GM10248 (cell line): ENCODE measurements at regions of chr3 and their contacts with region 1.

Region 1: DNA sequence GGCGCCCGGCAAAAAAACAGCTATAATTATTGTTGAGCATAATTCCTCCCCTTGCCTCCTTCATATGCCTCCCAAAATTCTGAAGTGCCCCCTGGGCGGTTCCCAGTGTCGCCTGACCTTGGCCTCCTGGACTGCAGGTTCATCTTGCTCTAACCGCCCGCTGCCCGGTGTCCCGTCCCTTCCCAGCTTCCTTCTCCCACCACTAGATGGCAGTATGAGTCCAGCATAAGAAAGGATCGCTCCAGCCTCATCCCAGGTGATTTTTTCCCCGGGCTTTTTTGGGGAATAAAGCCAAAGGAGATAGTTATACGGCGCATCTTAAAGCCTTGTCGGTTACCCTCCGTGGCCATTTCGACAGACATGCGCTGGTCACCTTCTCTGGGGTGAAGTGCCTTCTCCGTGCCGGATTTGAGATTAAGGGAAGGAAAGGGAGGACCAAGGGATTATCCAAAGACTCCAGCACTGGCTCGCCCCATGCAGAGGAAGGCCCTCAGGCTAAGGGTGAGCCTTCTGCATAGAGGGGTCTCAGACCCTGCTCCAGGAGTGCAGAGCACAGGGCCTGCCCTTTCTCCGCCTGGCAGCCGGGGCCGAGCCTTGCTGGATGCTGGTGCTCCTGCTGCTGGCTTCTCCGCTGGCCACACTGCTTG is 45.8 kb upstream of the TRA2B start:
- DNase-seq: peak; percentile 81
- CTCF ChIP-seq: peak; percentile 89

Region 2: GRCh38 chr3:186013312-186013711 is 29.7 kb after region 1 on chr3:
- CTCF ChIA-PET with region 1: no interaction called
- POLR2A ChIA-PET with region 1: no interaction called
- DNase-seq: no peak
- CTCF ChIP-seq: no peak

Region 3: DNA sequence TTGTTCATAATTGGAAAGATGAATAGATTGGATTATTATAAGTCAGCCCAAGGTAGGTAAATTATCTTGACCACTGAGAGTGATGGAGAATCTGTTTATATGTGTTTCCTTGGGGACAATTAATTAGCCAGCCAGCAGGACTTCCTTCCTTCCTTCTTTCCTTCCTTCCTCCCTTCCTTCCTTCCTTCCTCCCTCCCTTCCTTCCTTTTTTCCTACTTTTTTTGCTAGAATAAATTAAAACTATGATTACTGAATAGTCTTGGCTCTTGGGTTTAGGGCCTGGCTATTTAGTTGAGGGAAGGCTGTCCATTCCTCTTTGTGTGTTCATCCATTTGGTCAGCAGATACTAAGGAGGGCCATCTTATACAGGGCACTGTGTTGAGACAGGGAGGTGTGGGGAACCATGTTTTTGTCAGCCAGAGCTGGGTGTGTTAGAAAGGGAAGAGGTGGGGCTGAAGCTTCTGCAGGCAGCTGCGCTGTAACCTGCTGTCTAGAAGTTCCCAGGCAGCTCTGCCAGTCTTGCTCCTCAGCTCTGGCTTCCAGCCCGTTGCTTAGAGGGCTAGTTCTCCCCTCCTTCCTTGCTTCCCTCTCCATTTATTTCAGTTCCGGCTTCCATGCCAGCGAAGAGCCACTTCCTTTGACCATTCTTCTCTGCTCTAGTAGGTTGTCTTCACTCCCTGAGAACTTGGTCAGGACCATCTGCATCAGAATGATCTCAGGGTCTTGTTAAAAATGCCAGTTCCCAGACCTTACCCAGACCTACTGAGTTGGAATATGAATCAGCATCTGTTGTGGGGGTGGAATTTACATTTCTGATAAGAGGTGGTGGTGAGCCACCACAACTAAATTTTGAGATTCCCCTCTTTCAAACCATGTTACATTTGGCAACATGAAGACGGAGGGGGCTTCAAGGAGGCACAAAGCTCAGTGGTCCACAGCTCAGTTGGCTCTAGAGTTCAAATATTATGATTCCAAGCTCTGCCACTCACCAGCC is 264.5 kb after region 1 on chr3:
- CTCF ChIA-PET with region 1: interaction called, 32 read pairs
- POLR2A ChIA-PET with region 1: no interaction called
- DNase-seq: no peak
- CTCF ChIP-seq: no peak